Activated CD4-positive, alpha-beta T cell treated with anti-CD3 and anti-CD28 coated beads, Interleukin-2, amount 10 ng/mL, durations not matched to agents 24 days and 14 days (primary cell): ENCODE measurements at regions of chr16 and their contacts with region 1.

Region 1: GRCh38 chr16:15427648-15428239 is 6.6 kb upstream of the BMERB1 start:
- DNase-seq: peak; percentile 83
- H3K4me3 Mint-ChIP-seq: no peak overlapping the region
- H3K27ac Mint-ChIP-seq: no peak overlapping the region
- H3K4me1 Mint-ChIP-seq: peaks cover 2% of the 10 kb centered on the region
- H3K27me3 Mint-ChIP-seq: peaks cover 5% of the 10 kb centered on the region

Region 2: GRCh38 chr16:15464401-15465186 is 36.9 kb after region 1 on chr16:
- intact Hi-C with region 1: loop called (anchors 2 kb)
- DNase-seq: no peak
- H3K4me3 Mint-ChIP-seq: no peak overlapping the region
- H3K27ac Mint-ChIP-seq: no peak overlapping the region
- H3K4me1 Mint-ChIP-seq: peaks cover 5% of the 10 kb centered on the region
- H3K27me3 Mint-ChIP-seq: peaks cover 2% of the 10 kb centered on the region

Region 3: GRCh38 chr16:15498427-15499175 is 70.9 kb after region 1 on chr16:
- intact Hi-C with region 1: no loop called
- DNase-seq: no peak
- H3K4me3 Mint-ChIP-seq: no peak overlapping the region
- H3K27ac Mint-ChIP-seq: no peak overlapping the region
- H3K4me1 Mint-ChIP-seq: peaks cover 23% of the 10 kb centered on the region
- H3K27me3 Mint-ChIP-seq: no peaks in the 10 kb centered on the region

Region 4: GRCh38 chr16:15509593-15510535 is 82.1 kb after region 1 on chr16:
- intact Hi-C with region 1: loop called (anchors 1 kb)
- DNase-seq: peak; percentile 68
- H3K4me3 Mint-ChIP-seq: peak overlapping the region; percentile 39
- H3K27ac Mint-ChIP-seq: peak overlapping the region; percentile 70
- H3K4me1 Mint-ChIP-seq: peaks cover 24% of the 10 kb centered on the region
- H3K27me3 Mint-ChIP-seq: no peaks in the 10 kb centered on the region

Region 5: GRCh38 chr16:15636392-15636873 is 208.7 kb after region 1 on chr16:
- intact Hi-C with region 1: loop called (anchors 1 kb)
- DNase-seq: peak; percentile 71
- H3K4me3 Mint-ChIP-seq: peak overlapping the region; percentile 66
- H3K27ac Mint-ChIP-seq: peak overlapping the region; percentile 91
- H3K4me1 Mint-ChIP-seq: peaks cover 59% of the 10 kb centered on the region
- H3K27me3 Mint-ChIP-seq: no peaks in the 10 kb centered on the region

Region 6: GRCh38 chr16:15704545-15704987 is 276.8 kb after region 1 on chr16:
- intact Hi-C with region 1: loop called (anchors 1 kb)
- DNase-seq: peak; percentile 92
- H3K4me3 Mint-ChIP-seq: no peak overlapping the region
- H3K27ac Mint-ChIP-seq: peak overlapping the region; percentile 49
- H3K4me1 Mint-ChIP-seq: peaks cover 13% of the 10 kb centered on the region
- H3K27me3 Mint-ChIP-seq: no peaks in the 10 kb centered on the region